ENCODE measurements at regions of chr5 and their contacts with region 1.

Region 1: DNA sequence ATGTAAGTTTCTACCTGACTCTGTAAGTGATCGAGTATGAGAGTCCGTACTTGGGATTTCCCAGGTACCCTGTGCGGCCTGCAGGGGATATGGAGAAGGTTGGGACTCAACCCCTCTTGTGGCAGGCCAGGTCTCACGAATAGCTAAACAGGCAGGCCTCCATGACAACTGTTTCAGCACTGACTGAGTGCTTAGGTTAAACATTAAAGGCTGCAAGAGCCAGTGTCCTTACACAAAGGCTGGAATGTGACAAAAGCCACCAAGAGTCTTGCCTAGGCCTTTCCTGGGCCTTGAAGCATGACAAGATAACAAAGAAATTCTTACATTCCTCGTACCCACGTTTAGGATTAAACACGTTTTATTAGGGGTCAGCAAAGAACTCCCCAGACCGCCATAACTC is 58.6 kb downstream of the THBS4 start:
- DNase-seq: no peak
- ATAC-seq: no peak
- H3K4me3 ChIP-seq: no peak overlapping the region
- H3K4me3 Mint-ChIP-seq: no peak overlapping the region
- H3K27ac ChIP-seq: no peak overlapping the region
- H3K27ac Mint-ChIP-seq: peak overlapping the region; percentile 87 to 94
- H3K4me1 ChIP-seq: peaks cover 11 to 23% of the 10 kb centered on the region in 2 experiments
- H3K4me1 Mint-ChIP-seq: peaks cover 29 to 45% (median 31%) of the 10 kb centered on the region in 3 donors
- H3K27me3 ChIP-seq: no peaks in the 10 kb centered on the region
- H3K27me3 Mint-ChIP-seq: no peaks in the 10 kb centered on the region

Region 2: GRCh38 chr5:80083101-80083890 is 10.5 kb before region 1 on chr5:
- CTCF ChIA-PET with region 1: interaction called, 7 to 26 read pairs
- POLR2A ChIA-PET with region 1: interaction called, 3 to 4 read pairs
- DNase-seq: peak in 10 of 35 experiments; percentile 1 to 65 (median 13)
- ATAC-seq: peak; percentile 63 to 81 (median 79)
- H3K4me3 ChIP-seq: peak overlapping the region; percentile 25 to 44
- H3K4me3 Mint-ChIP-seq: peak overlapping the region; percentile 62 to 82 (median 64)
- H3K27ac ChIP-seq: peak overlapping the region; percentile 45
- H3K27ac Mint-ChIP-seq: peak overlapping the region; percentile 58 to 82
- H3K4me1 ChIP-seq: peaks cover 4 to 8% of the 10 kb centered on the region in 2 experiments
- H3K4me1 Mint-ChIP-seq: peaks cover 7 to 12% (median 10%) of the 10 kb centered on the region in 3 donors
- H3K27me3 ChIP-seq: no peaks in the 10 kb centered on the region
- H3K27me3 Mint-ChIP-seq: no peaks in the 10 kb centered on the region

Region 3: DNA sequence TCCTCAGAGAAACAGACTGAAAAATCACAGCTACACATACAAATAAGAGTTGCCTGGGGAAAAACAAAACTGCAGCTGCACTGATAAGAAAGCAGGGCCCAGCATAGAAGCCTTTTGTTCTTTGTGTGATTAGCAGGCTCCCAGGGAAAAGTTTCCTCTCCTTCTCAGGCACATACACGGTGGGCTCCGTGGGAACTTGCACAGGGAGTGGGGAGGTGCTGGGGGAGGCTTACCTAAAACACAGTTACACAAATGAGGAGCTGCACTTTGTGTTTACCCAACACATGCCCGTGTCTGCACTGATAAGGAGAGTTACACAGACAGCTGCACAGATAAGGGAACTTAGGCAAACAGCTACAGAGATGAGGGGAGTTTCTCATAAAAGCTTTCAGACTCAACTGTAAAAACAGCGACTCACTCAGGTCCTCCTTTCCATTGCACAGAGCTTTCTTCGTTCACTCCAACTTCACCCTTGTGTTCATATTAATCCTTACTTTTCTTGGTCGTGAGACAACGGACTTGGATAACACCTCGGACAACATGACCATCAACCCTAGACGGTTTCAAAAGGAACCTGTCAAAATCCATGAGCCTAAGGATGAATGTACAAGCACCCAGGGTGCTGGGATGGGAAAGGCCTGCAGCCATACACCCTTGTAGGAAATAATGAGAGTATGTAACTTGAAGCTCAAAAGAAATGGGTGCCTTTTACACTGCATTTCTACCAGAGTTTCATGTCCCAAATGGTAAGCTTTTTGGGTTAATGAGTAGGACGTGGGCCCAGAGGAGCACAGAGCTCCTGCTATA is 111.2 kb after region 1 on chr5:
- CTCF ChIA-PET with region 1: interaction called, 14 to 17 read pairs
- POLR2A ChIA-PET with region 1: no interaction called
- DNase-seq: peak in 3 of 35 experiments; percentile 27 to 60 (median 33)
- ATAC-seq: peak; percentile 68 to 89 (median 80)
- H3K4me3 ChIP-seq: no peak overlapping the region
- H3K4me3 Mint-ChIP-seq: peak overlapping the region; percentile 13 to 56 (median 21)
- H3K27ac ChIP-seq: peak overlapping the region; percentile 12
- H3K27ac Mint-ChIP-seq: peak overlapping the region; percentile 78 to 89
- H3K4me1 ChIP-seq: peaks cover 44 to 68% of the 10 kb centered on the region in 2 experiments
- H3K4me1 Mint-ChIP-seq: peaks cover 87 to 90% (median 87%) of the 10 kb centered on the region in 3 donors
- H3K27me3 ChIP-seq: no peaks in the 10 kb centered on the region
- H3K27me3 Mint-ChIP-seq: no peaks in the 10 kb centered on the region

Region 4: GRCh38 chr5:80302636-80303035 is 208.8 kb after region 1 on chr5:
- CTCF ChIA-PET with region 1: interaction called, 39 to 169 read pairs
- POLR2A ChIA-PET with region 1: interaction called in 1 of 2 experiments, 6 read pairs
- DNase-seq: no peak
- ATAC-seq: no peak
- H3K4me3 ChIP-seq: no peak overlapping the region
- H3K4me3 Mint-ChIP-seq: no peak overlapping the region
- H3K27ac ChIP-seq: no peak overlapping the region
- H3K27ac Mint-ChIP-seq: no peak overlapping the region
- H3K4me1 ChIP-seq: no peaks in the 10 kb centered on the region
- H3K4me1 Mint-ChIP-seq: no peaks in the 10 kb centered on the region
- H3K27me3 ChIP-seq: no peaks in the 10 kb centered on the region
- H3K27me3 Mint-ChIP-seq: no peaks in the 10 kb centered on the region

Measured in T-cell (primary cell).